ENCODE measurements at regions of chr22 and their contacts with region 1.

Region 1: GRCh38 chr22:23857606-23858483 is at the start of gene SLC2A11:
- DNase-seq: peak; percentile 95 to 96
- H3K4me3 ChIP-seq: peak within 1 kb of the TSS; percentile 48 to 84 (median 68)
- H3K27ac ChIP-seq: peak within 1 kb of the TSS; percentile 68
- H3K4me1 ChIP-seq: peaks cover 3 to 15% (median 5%) of the 10 kb centered on the region in 4 experiments; a peak in 6 of 7 replicates
- H3K27me3 ChIP-seq: no peaks in the 10 kb centered on the region
- CTCF ChIP-seq: peak; percentile 24 to 50 (median 37); a peak in 3 of 4 replicates
- EP300 ChIP-seq: no peak
- POLR2A ChIP-seq: peak in 1 of 2 experiments; percentile 66; a peak in 2 of 3 replicates
- RAD21 ChIP-seq: peak in 1 of 2 experiments; percentile 36; a peak in 2 of 4 replicates
- total RNA-seq, gene SLC2A11: 12.5 and 13.2 TPM in 2 replicates

Region 2: DNA sequence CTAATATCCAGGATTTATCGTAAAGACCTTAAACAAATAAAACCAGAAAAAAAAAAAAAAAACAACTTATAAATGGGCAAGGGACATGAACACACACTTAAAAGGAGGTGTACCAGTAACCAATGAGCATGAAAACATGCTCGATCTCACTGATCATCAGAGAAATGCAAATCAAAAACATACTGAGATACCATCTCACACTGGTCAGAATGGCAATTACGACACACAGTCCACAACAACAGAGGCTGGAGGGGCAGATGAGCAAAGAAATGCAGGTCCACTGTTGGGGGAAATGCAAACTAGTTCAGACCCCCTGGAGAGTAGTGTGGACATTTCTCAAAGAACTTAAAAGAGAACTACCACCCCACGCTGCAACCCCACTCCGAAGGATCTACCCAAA is 153.8 kb before region 1 on chr22:
- CTCF ChIA-PET with region 1: no interaction called
- POLR2A ChIA-PET with region 1: no interaction called
- DNase-seq: no peak
- H3K4me3 ChIP-seq: no peak overlapping the region
- H3K27ac ChIP-seq: no peak overlapping the region
- H3K4me1 ChIP-seq: no peaks in the 10 kb centered on the region; a peak in 1 of 7 replicates
- H3K27me3 ChIP-seq: no peaks in the 10 kb centered on the region
- CTCF ChIP-seq: no peak
- EP300 ChIP-seq: no peak
- POLR2A ChIP-seq: no peak
- RAD21 ChIP-seq: no peak

Region 3: DNA sequence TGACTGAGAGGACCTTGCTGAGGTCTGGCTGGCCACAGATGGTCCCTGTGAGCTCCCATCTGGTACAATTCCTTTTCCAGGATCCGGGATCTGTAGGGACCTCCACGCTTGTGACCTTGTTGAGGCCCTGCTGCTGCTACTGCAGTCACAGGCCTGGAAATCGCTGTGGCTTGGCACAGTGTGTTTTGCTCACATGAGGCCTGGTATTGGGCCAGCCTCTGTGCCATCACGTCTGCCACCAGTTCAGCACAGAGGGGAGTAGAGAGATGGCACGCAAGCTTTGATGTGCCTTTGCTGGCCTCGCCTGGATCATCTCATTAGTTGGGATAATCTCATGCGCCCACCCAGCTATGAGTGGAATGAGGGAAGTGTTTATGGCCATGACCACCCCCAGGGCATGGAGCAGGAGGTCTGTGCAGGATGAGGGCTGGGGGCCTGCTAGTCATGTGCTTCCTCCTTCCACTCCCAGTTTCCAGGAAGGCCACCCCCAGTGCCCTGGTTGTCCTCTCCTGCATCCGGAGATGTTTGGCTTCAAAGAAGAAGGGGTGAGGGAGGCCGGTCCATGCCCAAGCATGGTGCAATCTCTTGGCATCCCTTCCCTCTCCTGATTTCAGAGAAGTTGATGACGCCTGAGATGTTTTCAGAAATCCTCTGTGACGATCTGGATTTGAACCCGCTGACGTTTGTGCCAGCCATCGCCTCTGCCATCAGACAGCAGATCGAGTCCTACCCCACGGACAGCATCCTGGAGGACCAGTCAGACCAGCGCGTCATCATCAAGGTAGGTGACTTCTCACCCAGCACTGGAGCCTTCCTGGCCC is 41.5 kb before region 1 on chr22:
- CTCF ChIA-PET with region 1: no interaction called
- POLR2A ChIA-PET with region 1: no interaction called
- DNase-seq: no peak
- H3K4me3 ChIP-seq: no peak overlapping the region
- H3K27ac ChIP-seq: no peak overlapping the region
- H3K4me1 ChIP-seq: no peaks in the 10 kb centered on the region
- H3K27me3 ChIP-seq: no peaks in the 10 kb centered on the region
- CTCF ChIP-seq: no peak
- EP300 ChIP-seq: no peak
- POLR2A ChIP-seq: no peak
- RAD21 ChIP-seq: no peak

Region 4: GRCh38 chr22:23878219-23878618 is 20.4 kb after region 1 on chr22:
- CTCF ChIA-PET with region 1: interaction called, 26 read pairs
- POLR2A ChIA-PET with region 1: interaction called, 3 read pairs
- DNase-seq: no peak
- H3K4me3 ChIP-seq: no peak overlapping the region
- H3K27ac ChIP-seq: no peak overlapping the region
- H3K4me1 ChIP-seq: no peaks in the 10 kb centered on the region
- H3K27me3 ChIP-seq: no peaks in the 10 kb centered on the region
- CTCF ChIP-seq: no peak
- EP300 ChIP-seq: no peak
- POLR2A ChIP-seq: no peak
- RAD21 ChIP-seq: no peak

Region 5: DNA sequence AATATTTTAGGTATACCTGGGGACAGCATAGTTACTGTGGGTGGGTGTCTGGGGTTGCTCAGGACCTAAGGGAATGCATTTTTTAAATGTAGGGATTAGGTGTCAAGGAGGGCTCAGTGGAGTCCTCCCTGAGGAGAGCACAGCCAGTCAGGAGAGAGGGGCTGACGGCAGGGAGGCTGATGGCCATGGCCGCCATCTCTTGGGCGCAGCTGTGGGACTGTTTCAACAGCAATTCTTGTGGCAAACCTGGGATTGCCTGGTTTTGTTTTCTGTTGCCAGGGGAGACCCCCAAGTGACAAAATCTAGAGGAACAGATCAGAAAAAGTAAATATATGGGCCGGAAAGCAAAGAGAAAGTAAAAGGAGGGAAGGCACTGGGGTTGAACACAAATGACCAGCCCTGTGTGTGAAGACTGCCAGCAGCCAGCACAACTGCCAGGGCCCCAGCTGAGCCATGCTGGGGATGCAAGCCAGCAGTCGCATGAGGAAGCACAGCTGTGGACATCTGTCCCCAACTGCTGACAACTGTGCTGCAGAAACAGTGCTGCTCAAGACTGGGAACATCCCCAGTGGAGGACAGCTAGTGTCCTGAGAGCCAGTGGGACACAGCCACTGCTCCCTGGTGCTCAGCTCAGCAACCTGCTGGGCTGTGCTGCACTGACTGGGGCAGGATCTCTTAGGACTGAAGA is 46.9 kb after region 1 on chr22:
- CTCF ChIA-PET with region 1: no interaction called
- POLR2A ChIA-PET with region 1: interaction called, 15 read pairs
- DNase-seq: no peak
- H3K4me3 ChIP-seq: no peak overlapping the region
- H3K27ac ChIP-seq: no peak overlapping the region
- H3K4me1 ChIP-seq: peaks cover 2 to 12% (median 8%) of the 10 kb centered on the region in 4 experiments
- H3K27me3 ChIP-seq: peaks cover 0 to 3% (median under 1%) of the 10 kb centered on the region in 4 experiments; a peak in 3 of 7 replicates
- CTCF ChIP-seq: no peak
- EP300 ChIP-seq: no peak
- POLR2A ChIP-seq: no peak
- RAD21 ChIP-seq: no peak